ENCODE measurements at regions of chr11 and their contacts with region 1.

Region 1: DNA sequence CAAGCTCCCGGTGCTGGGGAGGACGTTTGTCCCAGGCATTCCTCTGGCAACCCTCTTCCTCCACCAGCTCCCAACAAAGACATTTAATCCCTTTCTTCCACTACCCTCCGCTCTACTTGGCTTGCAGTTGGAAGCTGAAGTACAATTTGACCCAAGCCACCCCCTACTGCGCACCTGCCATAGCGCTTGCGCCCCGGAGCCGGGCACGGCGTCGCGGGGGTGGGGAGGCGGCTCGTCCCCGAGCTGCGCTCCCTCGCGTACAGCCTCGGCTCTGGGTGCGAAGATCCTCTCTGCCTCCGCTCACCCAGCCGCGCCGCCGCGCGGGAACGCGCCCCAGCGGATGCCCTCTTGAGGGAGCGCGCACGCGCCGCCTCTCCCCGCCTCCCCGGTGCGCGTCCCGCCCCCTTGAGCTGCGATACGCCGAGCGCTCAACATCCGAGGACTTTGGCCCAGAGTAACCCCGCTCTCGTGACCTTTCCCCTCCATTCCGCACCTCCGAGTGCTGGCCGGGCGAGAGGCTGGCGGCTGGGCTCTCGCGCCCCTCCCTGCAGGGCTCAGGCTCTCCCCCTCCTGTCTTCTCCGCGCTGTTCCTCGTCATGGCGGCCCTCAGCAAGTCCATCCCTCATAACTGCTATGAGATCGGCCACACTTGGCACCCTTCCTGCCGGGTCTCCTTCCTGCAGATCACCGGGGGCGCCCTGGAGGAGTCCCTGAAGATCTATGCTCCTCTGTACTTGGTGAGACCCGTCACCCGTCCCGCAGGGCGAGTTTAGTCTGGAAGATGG is at the start of gene TMEM135:
- DNase-seq: peak; percentile 98
- ATAC-seq: peak; percentile 93
- H3K4me3 ChIP-seq: peak within 1 kb of the TSS; percentile 97
- H3K27ac ChIP-seq: peak within 1 kb of the TSS; percentile 72
- H3K4me1 ChIP-seq: peaks cover 28% of the 10 kb centered on the region
- H3K27me3 ChIP-seq: no peaks in the 10 kb centered on the region
- CTCF ChIP-seq: 0 out of 2 replicates have a peak, but pooled peaks have one; percentile 13
- total RNA-seq, gene TMEM135: 14.0 and 20.2 TPM in 2 replicates

Region 2: GRCh38 chr11:86869966-86870570 is 167.6 kb before region 1 on chr11:
- CTCF ChIA-PET with region 1: no interaction called
- POLR2A ChIA-PET with region 1: no interaction called
- intact Hi-C with region 1: no loop called
- DNase-seq: peak; percentile 58
- ATAC-seq: peak; percentile 80
- H3K4me3 ChIP-seq: no peak overlapping the region
- H3K27ac ChIP-seq: no peak overlapping the region
- H3K4me1 ChIP-seq: no peaks in the 10 kb centered on the region; the same call in 1 of the 2 replicates
- H3K27me3 ChIP-seq: no peaks in the 10 kb centered on the region
- CTCF ChIP-seq: peak; percentile 76

Region 3: DNA sequence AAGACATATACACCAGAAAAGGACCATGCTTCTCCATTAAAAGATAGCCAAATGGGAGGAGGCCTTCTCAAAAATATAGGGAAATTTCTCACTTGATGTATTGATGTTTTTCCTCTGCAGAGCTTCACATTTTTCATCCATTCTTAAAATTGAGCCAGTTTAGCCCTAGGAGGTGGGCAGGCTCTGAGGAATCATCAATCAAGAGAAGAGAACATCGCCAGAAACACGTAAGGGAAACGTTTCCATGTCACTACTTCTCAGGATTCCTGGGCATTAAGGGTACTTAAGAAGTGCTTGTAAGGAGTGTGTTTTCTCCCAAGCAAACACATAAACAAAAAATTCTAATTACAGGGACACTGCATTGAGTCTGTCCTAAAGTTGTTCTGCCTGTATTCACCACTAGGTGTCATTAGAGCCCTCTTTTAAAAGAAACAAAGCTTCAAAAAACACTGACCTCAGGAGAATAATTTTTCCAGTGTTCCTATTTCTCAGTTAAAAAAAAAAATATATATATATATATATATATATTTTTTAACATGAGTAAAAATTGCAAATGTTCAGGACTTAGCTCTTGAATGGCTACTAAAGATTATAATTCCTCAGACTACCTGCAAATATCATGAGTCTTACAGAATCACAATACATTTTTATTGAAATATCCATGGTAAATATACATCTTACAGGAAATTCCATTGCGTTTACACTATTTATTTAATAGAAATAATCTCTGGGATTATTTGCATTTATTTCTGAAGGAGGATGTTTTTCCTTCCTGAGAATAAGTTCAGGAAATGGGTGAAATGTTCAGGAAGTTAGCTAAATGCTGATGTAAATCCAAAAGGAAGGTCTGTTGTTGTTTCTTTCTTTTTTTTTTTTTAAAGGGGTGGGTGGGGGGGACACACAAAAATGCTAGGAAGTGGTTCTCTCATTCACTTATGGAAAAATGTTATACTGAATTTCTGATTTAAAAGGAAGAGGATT is 98.5 kb before region 1 on chr11:
- CTCF ChIA-PET with region 1: interaction called, 4 read pairs
- POLR2A ChIA-PET with region 1: interaction called, 10 read pairs
- intact Hi-C with region 1: loop called (anchors 5 kb)
- DNase-seq: peak; percentile 83
- ATAC-seq: no peak
- H3K4me3 ChIP-seq: peak overlapping the region; percentile 23; the same call in 1 of the 2 replicates
- H3K27ac ChIP-seq: peak overlapping the region; percentile 88
- H3K4me1 ChIP-seq: peaks cover 60% of the 10 kb centered on the region
- H3K27me3 ChIP-seq: no peaks in the 10 kb centered on the region
- CTCF ChIP-seq: peak; percentile 71

Region 4: GRCh38 chr11:86990515-86990914 is 47.1 kb before region 1 on chr11:
- CTCF ChIA-PET with region 1: interaction called, 4 read pairs
- POLR2A ChIA-PET with region 1: interaction called, 4 read pairs
- intact Hi-C with region 1: loop called (anchors 2 kb)
- DNase-seq: peak; percentile 82
- ATAC-seq: peak; percentile 43
- H3K4me3 ChIP-seq: no peak overlapping the region
- H3K27ac ChIP-seq: no peak overlapping the region
- H3K4me1 ChIP-seq: peaks cover 9% of the 10 kb centered on the region
- H3K27me3 ChIP-seq: no peaks in the 10 kb centered on the region
- CTCF ChIP-seq: no peak

Region 5: DNA sequence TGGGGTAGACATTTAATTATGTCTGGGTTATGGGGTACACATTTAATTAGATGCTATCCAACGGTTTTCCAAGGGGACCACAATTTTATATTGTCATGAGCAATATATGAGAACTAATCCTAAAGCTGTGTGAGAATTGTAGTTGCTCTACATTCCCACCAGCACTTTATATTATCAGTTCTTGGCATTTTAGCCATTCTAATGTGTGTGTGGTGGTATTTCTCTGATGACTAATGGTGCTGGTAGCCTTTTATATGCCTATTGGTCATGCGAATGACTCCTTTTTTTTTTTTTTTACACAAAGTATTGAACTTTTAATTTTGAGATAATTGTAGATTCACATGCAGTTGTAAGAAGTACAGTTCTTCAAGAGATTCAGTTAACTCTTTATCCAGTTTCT is 26.3 kb after region 1 on chr11:
- CTCF ChIA-PET with region 1: no interaction called
- POLR2A ChIA-PET with region 1: no interaction called
- intact Hi-C with region 1: loop called (anchors 2 kb)
- DNase-seq: peak; percentile 56
- ATAC-seq: peak; percentile 53; the same call in 1 of the 2 replicates
- H3K4me3 ChIP-seq: no peak overlapping the region
- H3K27ac ChIP-seq: peak overlapping the region; percentile 6; the same call in 1 of the 2 replicates
- H3K4me1 ChIP-seq: no peaks in the 10 kb centered on the region; the same call in 1 of the 2 replicates
- H3K27me3 ChIP-seq: no peaks in the 10 kb centered on the region
- CTCF ChIP-seq: no peak

Region 6: DNA sequence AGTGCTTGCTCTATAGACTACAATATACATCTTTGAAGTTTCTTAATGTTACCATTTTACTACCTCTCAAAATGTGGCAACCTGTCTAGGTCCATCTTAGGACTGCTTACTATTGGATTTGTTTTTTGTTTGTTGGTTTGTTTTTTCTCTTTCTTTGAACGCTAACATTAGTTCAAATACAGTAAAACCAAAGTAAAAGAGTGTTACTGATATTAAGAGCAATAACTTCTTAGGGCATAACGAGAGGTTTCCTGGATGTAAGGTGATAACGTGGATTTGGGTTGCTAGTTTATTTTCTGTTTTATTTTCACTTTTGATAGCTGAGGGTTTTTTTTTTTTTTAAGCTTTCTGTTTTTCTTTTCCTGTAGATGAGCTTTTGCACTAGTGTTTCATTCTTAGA is 43.7 kb after region 1 on chr11:
- CTCF ChIA-PET with region 1: no interaction called
- POLR2A ChIA-PET with region 1: no interaction called
- intact Hi-C with region 1: no loop called
- DNase-seq: no peak
- ATAC-seq: no peak
- H3K4me3 ChIP-seq: no peak overlapping the region
- H3K27ac ChIP-seq: no peak overlapping the region
- H3K4me1 ChIP-seq: no peaks in the 10 kb centered on the region
- H3K27me3 ChIP-seq: no peaks in the 10 kb centered on the region
- CTCF ChIP-seq: no peak

Region 7: GRCh38 chr11:87097582-87097981 is 59.9 kb after region 1 on chr11:
- CTCF ChIA-PET with region 1: no interaction called
- POLR2A ChIA-PET with region 1: interaction called, 4 read pairs
- intact Hi-C with region 1: loop called (anchors 2 kb)
- DNase-seq: peak; percentile 76
- ATAC-seq: peak; percentile 79; the same call in 1 of the 2 replicates
- H3K4me3 ChIP-seq: no peak overlapping the region
- H3K27ac ChIP-seq: no peak overlapping the region
- H3K4me1 ChIP-seq: no peaks in the 10 kb centered on the region
- H3K27me3 ChIP-seq: no peaks in the 10 kb centered on the region
- CTCF ChIP-seq: peak; percentile 94

Region 8: GRCh38 chr11:88087337-88087736 is 1049.7 kb after region 1 on chr11:
- CTCF ChIA-PET with region 1: no interaction called
- POLR2A ChIA-PET with region 1: interaction called, 19 read pairs
- intact Hi-C with region 1: no loop called
- DNase-seq: no peak
- ATAC-seq: no peak
- H3K4me3 ChIP-seq: no peak overlapping the region
- H3K27ac ChIP-seq: no peak overlapping the region
- H3K4me1 ChIP-seq: no peaks in the 10 kb centered on the region
- H3K27me3 ChIP-seq: no peaks in the 10 kb centered on the region
- CTCF ChIP-seq: no peak